Breast epithelium (tissue), 4 donors: ENCODE measurements at regions of chr4 and their contacts with region 1.

Region 1: GRCh38 chr4:182994171-182994570 is 77.0 kb upstream of the DCTD start:
- DNase-seq: no peak
- H3K4me3 ChIP-seq: no peak overlapping the region
- H3K27ac ChIP-seq: no peak overlapping the region
- H3K4me1 ChIP-seq: no peaks in the 10 kb centered on the region
- H3K27me3 ChIP-seq: no peaks in the 10 kb centered on the region
- CTCF ChIP-seq: no peak
- POLR2A ChIP-seq: no peak

Region 2: GRCh38 chr4:182975806-182976205 is 18.4 kb before region 1 on chr4:
- intact Hi-C with region 1: no loop called
- DNase-seq: no peak
- H3K4me3 ChIP-seq: no peak overlapping the region
- H3K27ac ChIP-seq: no peak overlapping the region
- H3K4me1 ChIP-seq: no peaks in the 10 kb centered on the region
- H3K27me3 ChIP-seq: no peaks in the 10 kb centered on the region
- CTCF ChIP-seq: no peak
- POLR2A ChIP-seq: no peak

Region 3: GRCh38 chr4:183130328-183131173 is 136.4 kb after region 1 on chr4:
- intact Hi-C with region 1: loop called (anchors 5 kb)
- DNase-seq: peak; percentile 60 to 66
- H3K4me3 ChIP-seq: no peak overlapping the region
- H3K27ac ChIP-seq: no peak overlapping the region
- H3K4me1 ChIP-seq: no peaks in the 10 kb centered on the region
- H3K27me3 ChIP-seq: no peaks in the 10 kb centered on the region
- CTCF ChIP-seq: no peak
- POLR2A ChIP-seq: no peak

Region 4: DNA sequence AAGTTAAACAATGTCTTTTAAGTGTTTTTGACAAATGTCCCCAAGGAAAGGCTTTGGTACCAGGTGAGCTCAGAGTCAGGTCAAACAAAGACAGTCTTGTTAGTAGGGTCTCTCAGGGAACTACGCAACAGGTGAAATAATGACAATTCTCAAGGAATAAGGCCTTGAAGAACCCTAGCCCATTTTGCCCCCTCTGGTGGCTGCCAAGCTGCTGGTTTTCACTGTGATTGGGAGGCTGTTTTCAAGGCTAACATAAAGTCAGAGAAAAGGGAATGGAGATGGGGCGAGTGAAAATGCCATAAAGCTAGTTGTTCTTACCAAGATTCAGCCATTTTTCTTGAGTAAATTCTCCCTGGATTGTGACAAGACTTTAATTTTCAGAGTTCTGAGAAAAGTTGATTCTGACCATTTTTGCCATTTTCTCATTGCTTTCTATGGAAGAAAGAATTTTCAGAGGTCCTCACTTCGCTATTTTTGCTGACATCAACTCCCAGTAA is 606.1 kb after region 1 on chr4:
- intact Hi-C with region 1: no loop called
- DNase-seq: no peak
- H3K4me3 ChIP-seq: no peak overlapping the region
- H3K27ac ChIP-seq: no peak overlapping the region
- H3K4me1 ChIP-seq: no peaks in the 10 kb centered on the region
- H3K27me3 ChIP-seq: no peaks in the 10 kb centered on the region
- CTCF ChIP-seq: no peak
- POLR2A ChIP-seq: no peak